HCT116 (cell line): ENCODE measurements at regions of chr9 and their contacts with region 1.

Region 1: GRCh38 chr9:32801530-32801929 is 18.2 kb downstream of the TMEM215 start:
- DNase-seq: no peak
- ATAC-seq: no peak
- H3K4me3 ChIP-seq: no peak overlapping the region
- H3K27ac ChIP-seq: no peak overlapping the region
- H3K4me1 ChIP-seq: no peaks in the 10 kb centered on the region
- H3K27me3 ChIP-seq: peaks cover 8% of the 10 kb centered on the region; the same call in 1 of the 2 replicates
- CTCF ChIP-seq: no peak
- POLR2A ChIP-seq: no peak
- RAD21 ChIP-seq: no peak

Region 2: GRCh38 chr9:32579706-32580331 is 221.7 kb before region 1 on chr9:
- CTCF ChIA-PET with region 1: no interaction called
- POLR2A ChIA-PET with region 1: no interaction called
- RAD21 ChIA-PET with region 1: no interaction called
- intact Hi-C with region 1: no loop called
- DNase-seq: peak; percentile 48
- ATAC-seq: peak; percentile 49; the same call in 1 of the 2 replicates
- H3K4me3 ChIP-seq: no peak overlapping the region
- H3K27ac ChIP-seq: no peak overlapping the region
- H3K4me1 ChIP-seq: no peaks in the 10 kb centered on the region
- H3K27me3 ChIP-seq: no peaks in the 10 kb centered on the region
- CTCF ChIP-seq: peak; percentile 85 to 94 (median 91)
- POLR2A ChIP-seq: no peak
- RAD21 ChIP-seq: peak; percentile 83

Region 3: DNA sequence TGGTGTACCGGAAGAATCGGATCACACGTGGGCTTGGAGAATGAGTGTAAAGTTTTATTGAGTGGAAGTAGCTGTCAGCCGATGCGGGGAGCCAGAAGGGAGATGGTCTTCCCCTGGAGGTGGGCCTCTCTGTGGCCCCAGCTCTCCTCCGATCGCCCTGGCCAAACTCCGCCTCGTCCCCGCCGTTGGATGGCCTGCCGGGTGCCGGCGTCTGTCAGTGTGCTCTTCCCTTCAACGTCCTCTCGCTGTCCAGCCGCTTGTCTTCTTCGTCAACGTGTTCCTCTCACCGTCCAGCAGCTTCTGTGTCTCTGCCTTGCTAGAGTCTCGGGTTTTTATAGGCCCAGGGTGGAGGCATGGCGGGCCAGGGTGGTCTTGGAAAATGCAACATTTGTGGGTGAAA is 45.8 kb before region 1 on chr9:
- CTCF ChIA-PET with region 1: no interaction called
- POLR2A ChIA-PET with region 1: no interaction called
- RAD21 ChIA-PET with region 1: no interaction called
- intact Hi-C with region 1: loop called (anchors 10 kb)
- DNase-seq: no peak
- ATAC-seq: no peak
- H3K4me3 ChIP-seq: no peak overlapping the region
- H3K27ac ChIP-seq: no peak overlapping the region
- H3K4me1 ChIP-seq: no peaks in the 10 kb centered on the region
- H3K27me3 ChIP-seq: 0 out of 2 replicates have a peak, but pooled peaks cover 8% of the 10 kb centered on the region
- CTCF ChIP-seq: no peak
- POLR2A ChIP-seq: no peak
- RAD21 ChIP-seq: no peak

Region 4: DNA sequence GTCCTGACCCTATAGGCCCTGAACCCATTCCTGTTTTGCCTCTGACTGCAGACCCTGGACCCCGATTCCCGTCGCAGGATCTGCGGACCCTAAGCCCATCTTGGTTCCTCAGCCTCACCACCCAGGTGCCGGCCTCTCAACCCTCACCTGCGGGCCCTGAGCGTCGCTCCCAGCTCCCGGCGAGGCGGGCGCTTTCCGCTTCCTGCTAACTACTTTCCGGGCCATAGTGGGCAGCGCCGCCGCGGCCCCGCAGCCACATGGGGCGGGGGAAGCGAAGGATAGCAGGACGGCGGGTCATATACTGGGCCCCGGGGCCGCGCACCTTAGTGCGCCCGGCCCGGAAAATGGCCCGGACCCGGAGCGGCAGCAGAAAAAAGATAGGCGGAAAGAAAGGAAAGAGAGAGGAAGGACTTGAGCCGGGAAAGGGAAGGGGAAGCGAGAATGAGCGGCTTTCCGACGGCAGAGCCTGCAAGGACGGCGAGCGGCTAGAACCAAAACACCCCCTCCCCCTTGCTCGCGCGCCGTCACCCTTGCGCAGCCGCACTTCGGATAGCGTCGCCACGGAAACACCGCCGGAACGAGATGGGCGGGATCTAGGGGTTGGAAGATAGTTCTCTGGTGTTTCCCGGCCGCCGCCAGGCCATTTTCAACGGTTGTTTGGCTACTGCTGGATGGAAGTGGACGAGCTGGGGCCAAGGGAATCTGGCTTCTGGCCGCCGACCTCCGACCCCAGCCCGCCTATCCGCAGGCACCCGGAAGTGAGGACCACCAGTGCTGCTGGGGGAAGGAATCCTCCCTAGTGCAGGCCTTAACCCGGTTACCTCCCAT is 1324.9 kb after region 1 on chr9 and contains the start of gene DCAF12:
- CTCF ChIA-PET with region 1: no interaction called
- POLR2A ChIA-PET with region 1: no interaction called
- RAD21 ChIA-PET with region 1: no interaction called
- intact Hi-C with region 1: no loop called
- DNase-seq: peak; percentile 78
- ATAC-seq: peak; percentile 93
- H3K4me3 ChIP-seq: peak within 1 kb of the TSS; percentile 63 to 85
- H3K27ac ChIP-seq: peak within 1 kb of the TSS; percentile 86
- H3K4me1 ChIP-seq: peaks cover 10 to 12% of the 10 kb centered on the region in 2 experiments
- H3K27me3 ChIP-seq: no peaks in the 10 kb centered on the region
- CTCF ChIP-seq: no peak
- POLR2A ChIP-seq: peak; percentile 14
- RAD21 ChIP-seq: no peak; the same call in 1 of the 2 replicates
- total RNA-seq, gene DCAF12: 40.2 TPM